Activated naive CD8-positive, alpha-beta T cell treated with anti-CD3 and anti-CD28 coated beads, Interleukin-2, amount 10 ng/mL, durations not matched to agents 7 days and 5 days (primary cell): ENCODE measurements at regions of chrX and their contacts with region 1.

Region 1: GRCh38 chrX:12946838-12947544 is 27.9 kb upstream of the TMSB4X start:
- DNase-seq: peak; percentile 55
- ATAC-seq: no peak
- H3K4me3 Mint-ChIP-seq: peak overlapping the region; percentile 73
- H3K27ac Mint-ChIP-seq: peak overlapping the region; percentile 90
- H3K4me1 Mint-ChIP-seq: peaks cover 38% of the 10 kb centered on the region
- H3K27me3 Mint-ChIP-seq: no peaks in the 10 kb centered on the region

Region 2: DNA sequence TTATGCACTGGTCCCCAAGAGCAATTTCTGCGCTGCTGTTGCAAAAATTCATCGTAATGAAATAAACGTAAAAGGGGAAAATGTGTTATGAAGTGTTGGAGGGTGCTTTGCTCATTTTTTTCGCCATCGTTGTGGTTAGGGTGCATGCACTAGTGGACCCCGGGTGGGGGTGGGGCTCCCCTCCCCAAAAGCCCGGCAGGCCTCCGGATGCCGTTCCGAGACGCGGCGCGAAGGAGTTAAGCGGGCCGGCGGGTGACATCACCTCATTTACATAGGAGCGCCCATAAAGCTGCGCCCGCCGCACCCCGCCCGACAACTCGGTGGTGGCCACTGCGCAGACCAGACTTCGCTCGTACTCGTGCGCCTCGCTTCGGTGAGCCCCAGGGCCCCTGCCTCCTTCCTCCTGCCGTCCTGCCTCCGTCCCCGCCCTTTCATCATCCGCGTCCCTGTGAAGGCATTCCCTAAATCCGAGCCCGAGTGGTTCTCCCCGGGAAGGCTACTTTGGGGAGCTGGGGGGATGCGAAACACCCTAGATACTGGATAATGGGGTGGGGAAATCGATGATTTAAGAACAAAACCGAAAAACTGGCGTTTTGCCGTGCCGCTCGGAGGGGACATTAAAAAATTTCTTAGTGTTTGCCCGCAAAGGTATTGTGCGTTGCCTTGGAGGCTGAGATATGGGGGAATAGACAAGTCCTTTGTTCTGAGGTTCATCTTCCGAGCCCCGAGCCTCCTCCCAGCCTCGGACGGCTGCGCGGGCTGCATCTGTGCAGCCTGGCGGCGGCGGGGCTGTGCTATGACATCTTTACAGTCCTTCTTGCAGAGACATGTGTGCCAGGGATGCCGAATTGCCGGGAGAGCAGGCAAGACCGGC is 28.0 kb after region 1 on chrX and contains the start of gene TMSB4X:
- POLR2A ChIA-PET with region 1: interaction called, 942 read pairs
- DNase-seq: peak; percentile 86
- ATAC-seq: peak; percentile 48
- H3K4me3 Mint-ChIP-seq: peak within 1 kb of the TSS; percentile 97
- H3K27ac Mint-ChIP-seq: peak within 1 kb of the TSS; percentile 98
- H3K4me1 Mint-ChIP-seq: peaks cover 42% of the 10 kb centered on the region
- H3K27me3 Mint-ChIP-seq: no peaks in the 10 kb centered on the region
- total RNA-seq, gene TMSB4X: 8,001 to 8,464 TPM

Region 3: DNA sequence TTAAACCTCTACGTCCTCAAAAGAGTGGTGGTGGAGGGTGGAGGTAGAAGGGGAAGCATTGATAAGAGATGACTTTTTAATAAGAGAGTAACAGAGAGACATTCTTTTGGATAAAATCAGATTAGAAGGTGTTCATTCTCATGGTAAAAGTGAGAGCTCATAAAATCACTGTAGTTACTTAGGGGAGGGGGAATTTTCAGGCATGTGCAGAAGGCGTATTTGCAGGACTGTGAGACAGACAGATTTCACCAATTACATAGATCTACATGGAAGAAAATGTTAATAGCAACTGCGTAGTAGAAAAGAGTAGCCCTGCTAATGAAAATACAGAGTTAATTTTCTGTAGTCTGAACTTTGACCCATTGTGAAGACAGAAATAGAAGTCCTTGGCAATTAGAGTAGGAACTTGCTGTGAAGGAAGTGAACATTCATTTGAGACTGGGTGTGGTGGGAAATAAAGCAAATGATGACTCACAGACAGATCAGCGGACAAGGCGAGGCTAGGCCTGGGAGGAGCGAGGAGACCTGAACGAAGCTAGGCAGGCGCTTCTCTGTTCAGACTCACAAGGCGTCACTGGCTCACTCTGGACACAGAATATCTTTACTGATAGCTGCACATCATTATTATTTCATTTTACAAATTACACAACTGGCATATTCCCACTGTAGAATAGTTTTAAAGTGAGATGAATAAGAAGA is 154.6 kb after region 1 on chrX:
- POLR2A ChIA-PET with region 1: no interaction called
- DNase-seq: no peak
- ATAC-seq: peak; percentile 73
- H3K4me3 Mint-ChIP-seq: peak overlapping the region; percentile 6
- H3K27ac Mint-ChIP-seq: peak overlapping the region; percentile 46
- H3K4me1 Mint-ChIP-seq: peaks cover 24% of the 10 kb centered on the region
- H3K27me3 Mint-ChIP-seq: no peaks in the 10 kb centered on the region

Region 4: GRCh38 chrX:13119386-13119785 is 172.4 kb after region 1 on chrX:
- POLR2A ChIA-PET with region 1: no interaction called
- DNase-seq: no peak
- ATAC-seq: no peak
- H3K4me3 Mint-ChIP-seq: no peak overlapping the region
- H3K27ac Mint-ChIP-seq: no peak overlapping the region
- H3K4me1 Mint-ChIP-seq: peaks cover 23% of the 10 kb centered on the region
- H3K27me3 Mint-ChIP-seq: no peaks in the 10 kb centered on the region